B cell (primary cell): ENCODE measurements at regions of chr15 and their contacts with region 1.

Region 1: GRCh38 chr15:78056714-78057269 is 20.7 kb downstream of the TBC1D2B start:
- DNase-seq: peak; percentile 64
- ATAC-seq: peak; percentile 77
- H3K4me3 ChIP-seq: peak overlapping the region in 1 of 5 experiments; percentile 26
- H3K4me3 Mint-ChIP-seq: peak overlapping the region; percentile 42
- H3K27ac ChIP-seq: peak overlapping the region; percentile 54 to 79
- H3K27ac Mint-ChIP-seq: peak overlapping the region; percentile 86
- H3K4me1 ChIP-seq: peaks cover 56 to 58% of the 10 kb centered on the region in 2 donors
- H3K4me1 Mint-ChIP-seq: peaks cover 66% of the 10 kb centered on the region
- H3K27me3 ChIP-seq: no peaks in the 10 kb centered on the region
- H3K27me3 Mint-ChIP-seq: no peaks in the 10 kb centered on the region
- CTCF ChIP-seq: no peak

Region 2: GRCh38 chr15:78077058-78077877 is 20.5 kb after region 1 on chr15 and contains the start of gene TBC1D2B:
- CTCF ChIA-PET with region 1: interaction called, 8 read pairs
- POLR2A ChIA-PET with region 1: interaction called, 12 read pairs
- intact Hi-C with region 1: loop called (anchors 2 kb)
- DNase-seq: peak; percentile 76
- ATAC-seq: peak; percentile 94
- H3K4me3 ChIP-seq: peak within 1 kb of the TSS; percentile 76 to 89 (median 79)
- H3K4me3 Mint-ChIP-seq: peak within 1 kb of the TSS; percentile 93
- H3K27ac ChIP-seq: peak within 1 kb of the TSS in 1 of 2 donors; percentile 1
- H3K27ac Mint-ChIP-seq: peak within 1 kb of the TSS; percentile 89
- H3K4me1 ChIP-seq: peaks cover 17 to 22% of the 10 kb centered on the region in 2 donors
- H3K4me1 Mint-ChIP-seq: peaks cover 26% of the 10 kb centered on the region
- H3K27me3 ChIP-seq: no peaks in the 10 kb centered on the region
- H3K27me3 Mint-ChIP-seq: no peaks in the 10 kb centered on the region
- CTCF ChIP-seq: peak; percentile 12
- total RNA-seq, gene TBC1D2B: 26.1 and 29.8 TPM in 2 replicates